Heart right ventricle (tissue), 16 donors: ENCODE measurements at regions of chr22 and their contacts with region 1.

Region 1: GRCh38 chr22:46099740-46100139 is 50.6 kb upstream of the PPARA start:
- DNase-seq: no peak
- ATAC-seq: no peak
- H3K4me3 ChIP-seq: no peak overlapping the region
- H3K27ac ChIP-seq: peak overlapping the region in 7 of 10 donors; percentile 4 to 94 (median 30)
- H3K4me1 ChIP-seq: peaks cover 46 to 98% (median 75%) of the 10 kb centered on the region in 9 donors
- H3K27me3 ChIP-seq: no peaks in the 10 kb centered on the region
- CTCF ChIP-seq: no peak

Region 2: DNA sequence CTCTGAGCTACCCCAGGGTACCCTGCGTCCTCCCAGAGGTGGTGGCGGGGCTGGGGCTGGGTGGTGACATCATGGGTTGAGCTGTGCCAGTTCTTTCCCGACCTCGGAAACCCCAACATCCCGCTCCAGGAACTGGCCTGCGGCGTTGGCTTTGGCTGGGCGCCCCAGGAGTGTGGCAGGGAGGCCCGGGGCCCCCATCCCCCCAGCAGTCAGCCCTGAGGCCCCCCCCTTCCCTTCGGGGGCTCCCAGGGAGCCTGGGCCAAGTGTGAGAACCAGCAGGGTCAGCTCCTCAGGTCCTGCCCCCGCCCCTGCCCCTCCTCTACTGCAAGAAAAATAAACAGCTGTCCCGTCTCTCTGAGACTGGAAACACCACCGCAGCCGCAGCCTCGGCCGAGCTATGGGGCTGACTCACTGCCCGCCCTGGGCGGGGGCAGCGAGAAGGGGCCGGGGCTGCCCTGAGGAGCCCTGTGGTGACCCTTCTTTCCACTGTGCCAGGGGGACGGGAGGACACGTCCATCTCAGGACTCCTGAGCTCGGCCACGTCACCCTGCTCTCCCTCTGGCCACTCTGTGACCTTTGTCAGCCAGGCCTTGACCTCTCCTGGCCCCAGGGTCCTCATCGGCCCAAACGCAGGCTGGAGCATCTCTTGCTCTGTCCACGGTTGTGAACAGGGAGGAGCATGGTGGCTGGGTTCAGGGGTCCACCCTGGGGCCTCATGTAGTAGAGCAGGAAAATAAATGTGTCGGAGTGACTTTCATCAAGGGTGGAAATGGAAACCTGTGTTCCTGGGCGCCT is 196.2 kb before region 1 on chr22:
- intact Hi-C with region 1: no loop called
- DNase-seq: peak in 1 of 2 donors; percentile 38
- ATAC-seq: peak in 4 of 8 donors; percentile 22 to 53 (median 38)
- H3K4me3 ChIP-seq: no peak overlapping the region
- H3K27ac ChIP-seq: no peak overlapping the region
- H3K4me1 ChIP-seq: peaks cover 0 to 21% (median 11%) of the 10 kb centered on the region in 9 donors
- H3K27me3 ChIP-seq: peaks cover 0 to 17% (median 7%) of the 10 kb centered on the region in 7 donors
- CTCF ChIP-seq: no peak

Region 3: DNA sequence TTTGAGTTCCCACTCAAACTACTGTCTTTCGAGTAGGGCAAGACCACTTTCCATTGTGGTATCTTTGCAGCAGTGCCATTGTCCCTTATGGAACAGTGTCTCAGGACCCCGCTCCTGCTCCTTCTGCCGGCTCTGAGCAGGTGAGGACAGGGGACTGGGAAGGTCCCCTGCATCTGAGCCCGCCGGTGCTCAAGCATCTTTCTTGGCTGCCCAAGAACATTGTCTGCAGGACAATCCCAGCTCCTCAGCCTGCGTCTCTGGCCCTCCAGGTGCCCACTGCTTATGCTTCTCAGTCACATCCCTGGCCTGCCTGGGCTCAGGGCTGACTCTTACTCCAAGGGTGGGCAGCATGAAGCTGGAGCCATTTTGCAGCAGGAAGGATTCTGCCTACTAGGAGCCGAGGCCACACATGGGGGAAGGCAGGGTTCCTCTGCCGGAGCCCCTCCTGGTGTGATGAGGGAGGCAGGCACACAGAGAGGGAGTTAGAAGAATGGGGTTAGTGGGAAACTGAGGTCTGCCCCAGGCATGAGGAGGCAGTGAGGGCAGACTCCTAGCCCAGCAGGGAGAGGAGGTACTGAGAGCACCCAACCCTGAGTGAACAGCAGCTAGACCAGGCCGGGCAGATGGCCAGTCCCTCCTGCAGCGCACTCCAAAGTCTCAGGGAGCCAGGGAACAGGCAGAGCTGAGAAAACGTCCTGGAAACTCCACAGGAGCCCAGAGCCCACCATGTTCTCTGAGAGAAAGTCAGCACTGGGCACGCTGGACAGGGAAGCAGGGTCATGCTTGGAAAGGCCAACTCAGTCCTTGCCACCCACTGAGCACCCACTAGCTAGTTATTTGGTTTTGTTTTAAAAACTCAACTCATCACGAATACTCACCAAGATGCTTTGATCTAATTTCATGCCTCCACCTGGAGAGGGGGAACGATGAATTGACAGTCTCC is 43.1 kb after region 1 on chr22:
- intact Hi-C with region 1: loop called in 1 of 10 experiments (anchors 1 kb)
- DNase-seq: peak in 1 of 2 donors; percentile 23
- ATAC-seq: no peak
- H3K4me3 ChIP-seq: no peak overlapping the region
- H3K27ac ChIP-seq: no peak overlapping the region
- H3K4me1 ChIP-seq: peaks cover 10 to 33% (median 15%) of the 10 kb centered on the region in 9 donors
- H3K27me3 ChIP-seq: no peaks in the 10 kb centered on the region
- CTCF ChIP-seq: no peak